Mammary epithelial cell (primary cell): ENCODE measurements at regions of chr11 and their contacts with region 1.

Region 1: DNA sequence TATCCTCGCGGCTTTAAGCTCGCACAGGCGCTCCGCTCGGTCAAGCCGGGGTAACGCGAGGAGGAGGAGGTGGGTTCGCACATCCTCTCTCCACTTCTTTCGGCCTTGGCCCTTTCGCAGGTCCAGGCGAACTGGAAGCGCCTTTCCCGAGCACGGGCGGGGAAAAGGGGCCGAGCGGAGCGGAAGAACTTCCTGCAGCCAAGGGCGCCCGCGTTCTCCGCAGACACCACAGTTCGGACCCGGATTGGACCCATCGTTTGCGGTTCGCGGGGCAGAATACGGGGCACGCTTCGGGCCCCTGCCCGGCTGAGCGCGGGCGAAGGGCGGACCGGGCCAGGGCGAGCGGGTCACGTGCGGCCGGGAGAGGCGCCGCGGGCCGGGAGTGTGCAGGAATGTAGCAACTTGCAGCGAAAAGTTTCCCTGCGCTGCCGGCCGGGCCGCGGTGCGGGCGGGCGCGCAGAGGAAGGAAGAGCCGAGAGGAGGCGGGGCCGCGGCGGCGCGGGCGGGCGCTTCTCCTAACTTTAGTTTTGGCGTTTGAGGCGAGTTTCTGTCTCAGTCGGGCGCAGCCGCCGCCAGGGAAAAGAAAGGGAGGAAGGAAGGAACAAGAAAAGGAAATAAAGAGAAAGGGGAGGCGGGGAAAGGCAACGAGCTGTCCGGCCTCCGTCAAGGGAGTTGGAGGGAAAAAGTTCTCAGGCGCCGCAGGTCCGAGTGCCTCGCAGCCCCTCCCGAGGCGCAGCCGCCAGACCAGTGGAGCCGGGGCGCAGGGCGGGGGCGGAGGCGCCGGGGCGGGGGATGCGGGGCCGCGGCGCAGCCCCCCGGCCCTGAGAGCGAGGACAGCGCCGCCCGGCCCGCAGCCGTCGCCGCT is at the start of gene YAP1:
- DNase-seq: peak; percentile 95
- H3K4me3 ChIP-seq: peak within 1 kb of the TSS; percentile 61 to 82 (median 80)
- H3K27ac ChIP-seq: peak within 1 kb of the TSS; percentile 97
- H3K4me1 ChIP-seq: peaks cover 17% of the 10 kb centered on the region
- H3K27me3 ChIP-seq: no peaks in the 10 kb centered on the region
- CTCF ChIP-seq: no peak
- total RNA-seq, gene YAP1: 163 to 234 TPM

Region 2: DNA sequence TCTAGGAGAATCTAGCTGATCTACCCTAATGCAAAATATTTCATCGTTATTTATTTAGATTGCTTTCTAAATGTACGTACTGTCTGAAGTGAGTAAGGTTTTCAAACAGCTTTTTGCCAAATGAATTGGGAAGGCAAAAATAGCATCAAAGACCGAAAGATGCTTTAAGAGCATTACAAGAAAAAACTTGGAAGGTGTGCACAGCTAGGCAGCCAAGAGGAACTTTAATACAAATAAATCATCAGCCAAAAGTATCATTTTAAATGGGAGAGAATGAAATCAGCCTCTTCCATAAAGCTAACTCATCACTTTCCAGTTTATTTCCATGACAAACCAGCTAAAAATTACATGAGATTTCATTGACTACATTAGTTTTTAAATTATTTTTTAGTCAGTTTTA is 93.1 kb before region 1 on chr11:
- CTCF ChIA-PET with region 1: no interaction called
- dilution Hi-C with region 1: no loop called
- in situ Hi-C with region 1: no loop called
- intact Hi-C with region 1: no loop called
- DNase-seq: no peak
- H3K4me3 ChIP-seq: no peak overlapping the region
- H3K27ac ChIP-seq: no peak overlapping the region
- H3K4me1 ChIP-seq: no peaks in the 10 kb centered on the region
- H3K27me3 ChIP-seq: no peaks in the 10 kb centered on the region
- CTCF ChIP-seq: no peak

Region 3: GRCh38 chr11:102047305-102047924 is 62.7 kb before region 1 on chr11 and contains the start of gene CFAP300:
- CTCF ChIA-PET with region 1: no interaction called
- dilution Hi-C with region 1: no loop called
- in situ Hi-C with region 1: no loop called
- intact Hi-C with region 1: loop called (anchors 5 kb)
- DNase-seq: peak; percentile 43
- H3K4me3 ChIP-seq: peak within 1 kb of the TSS; percentile 66 to 85 (median 72)
- H3K27ac ChIP-seq: peak within 1 kb of the TSS; percentile 65
- H3K4me1 ChIP-seq: peaks cover 15% of the 10 kb centered on the region
- H3K27me3 ChIP-seq: no peaks in the 10 kb centered on the region
- CTCF ChIP-seq: no peak
- total RNA-seq, gene CFAP300: 4.3 to 6.4 TPM

Region 4: DNA sequence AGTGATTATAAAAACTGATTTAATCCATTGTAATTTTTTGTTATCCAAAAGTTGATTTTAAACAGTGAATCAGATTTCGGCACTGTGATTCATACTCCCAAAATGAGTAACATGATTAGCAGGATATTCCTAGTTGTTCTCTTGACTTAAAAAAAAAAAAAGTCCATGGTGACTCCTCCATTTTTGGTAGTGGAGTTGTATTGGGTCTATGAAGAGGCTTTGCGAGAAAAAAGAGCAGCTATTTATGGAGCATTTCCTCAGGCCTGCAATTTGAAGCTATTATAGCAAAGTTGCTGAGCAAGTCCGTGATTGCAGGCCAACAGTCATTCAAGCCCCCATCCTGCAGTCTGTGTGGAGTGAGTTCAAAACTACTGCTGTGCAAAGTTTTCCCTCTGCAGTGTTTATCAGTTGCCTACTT is 29.0 kb after region 1 on chr11:
- CTCF ChIA-PET with region 1: no interaction called
- dilution Hi-C with region 1: no loop called
- in situ Hi-C with region 1: no loop called
- intact Hi-C with region 1: loop called (anchors 1 kb)
- DNase-seq: peak; percentile 82
- H3K4me3 ChIP-seq: peak overlapping the region in 1 of 3 experiments; percentile 14
- H3K27ac ChIP-seq: peak overlapping the region; percentile 93
- H3K4me1 ChIP-seq: peaks cover 23% of the 10 kb centered on the region
- H3K27me3 ChIP-seq: no peaks in the 10 kb centered on the region
- CTCF ChIP-seq: no peak

Region 5: GRCh38 chr11:102225689-102226568 is 115.8 kb after region 1 on chr11:
- CTCF ChIA-PET with region 1: no interaction called
- dilution Hi-C with region 1: loop called (anchors 5 kb)
- in situ Hi-C with region 1: no loop called
- intact Hi-C with region 1: loop called (anchors 1 kb)
- DNase-seq: peak; percentile 91
- H3K4me3 ChIP-seq: peak overlapping the region in 2 of 3 experiments; percentile 23 to 40
- H3K27ac ChIP-seq: peak overlapping the region; percentile 99
- H3K4me1 ChIP-seq: peaks cover 75% of the 10 kb centered on the region
- H3K27me3 ChIP-seq: no peaks in the 10 kb centered on the region
- CTCF ChIP-seq: no peak

Region 6: DNA sequence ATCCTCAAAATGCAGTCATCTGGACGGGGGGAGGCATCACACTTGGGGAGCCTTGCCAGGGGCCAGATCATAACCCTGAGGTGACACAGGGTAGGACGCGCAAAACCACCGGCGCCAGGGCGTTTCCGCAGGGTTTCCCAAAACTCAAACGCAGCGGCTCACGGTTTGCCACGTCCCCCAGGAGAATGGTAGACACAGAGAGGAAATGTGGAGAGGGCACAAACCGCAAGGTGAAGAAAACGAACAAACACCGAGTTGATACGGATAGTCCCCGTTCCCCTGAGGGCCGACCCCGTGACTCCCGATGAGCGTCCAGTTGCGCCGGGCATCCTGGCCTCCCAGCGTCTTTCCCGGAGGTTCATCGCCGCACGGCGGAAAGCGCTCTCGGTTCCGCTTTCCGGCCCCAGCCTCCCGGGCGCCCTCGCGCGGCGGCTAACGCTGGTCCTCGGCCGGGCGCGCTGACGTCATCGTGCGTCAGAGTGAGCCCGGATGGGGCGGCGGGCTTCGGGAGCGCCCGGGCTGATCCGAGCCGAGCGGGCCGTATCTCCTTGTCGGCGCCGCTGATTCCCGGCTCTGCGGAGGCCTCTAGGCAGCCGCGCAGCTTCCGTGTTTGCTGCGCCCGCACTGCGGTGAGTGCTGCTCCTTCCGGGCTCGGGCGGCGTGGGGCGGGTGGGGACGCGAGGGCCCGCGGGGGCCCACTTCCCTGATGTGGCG is 236.8 kb after region 1 on chr11 and contains the start of gene BIRC2:
- CTCF ChIA-PET with region 1: no interaction called
- dilution Hi-C with region 1: no loop called
- in situ Hi-C with region 1: no loop called
- intact Hi-C with region 1: loop called (anchors 5 kb)
- DNase-seq: peak; percentile 94
- H3K4me3 ChIP-seq: peak within 1 kb of the TSS; percentile 65 to 81 (median 80)
- H3K27ac ChIP-seq: peak within 1 kb of the TSS; percentile 88
- H3K4me1 ChIP-seq: peaks cover 23% of the 10 kb centered on the region
- H3K27me3 ChIP-seq: no peaks in the 10 kb centered on the region
- CTCF ChIP-seq: peak; percentile 52 to 83
- total RNA-seq, gene BIRC2: 59.4 to 78.2 TPM